MCF 10A (cell line): ENCODE measurements at regions of chr5 and their contacts with region 1.

Region 1: GRCh38 chr5:180568914-180569313 is 22.4 kb downstream of the SCGB3A1 start:
- DNase-seq: no peak
- H3K4me3 Mint-ChIP-seq: no peak overlapping the region
- H3K27ac Mint-ChIP-seq: no peak overlapping the region
- H3K4me1 Mint-ChIP-seq: no peaks in the 10 kb centered on the region
- H3K27me3 Mint-ChIP-seq: no peaks in the 10 kb centered on the region
- CTCF ChIP-seq: no peak

Region 2: GRCh38 chr5:180499684-180500083 is 69.2 kb before region 1 on chr5:
- CTCF ChIA-PET with region 1: no interaction called
- POLR2A ChIA-PET with region 1: interaction called, 4 read pairs
- intact Hi-C with region 1: loop called (anchors 5 kb)
- DNase-seq: peak; percentile 24
- H3K4me3 Mint-ChIP-seq: no peak overlapping the region
- H3K27ac Mint-ChIP-seq: peak overlapping the region; percentile 39
- H3K4me1 Mint-ChIP-seq: peaks cover 32% of the 10 kb centered on the region
- H3K27me3 Mint-ChIP-seq: no peaks in the 10 kb centered on the region
- CTCF ChIP-seq: no peak

Region 3: GRCh38 chr5:180583738-180584137 is 14.8 kb after region 1 on chr5:
- CTCF ChIA-PET with region 1: no interaction called
- POLR2A ChIA-PET with region 1: interaction called, 10 read pairs
- intact Hi-C with region 1: no loop called
- DNase-seq: no peak
- H3K4me3 Mint-ChIP-seq: no peak overlapping the region
- H3K27ac Mint-ChIP-seq: no peak overlapping the region
- H3K4me1 Mint-ChIP-seq: no peaks in the 10 kb centered on the region
- H3K27me3 Mint-ChIP-seq: no peaks in the 10 kb centered on the region
- CTCF ChIP-seq: no peak

Region 4: DNA sequence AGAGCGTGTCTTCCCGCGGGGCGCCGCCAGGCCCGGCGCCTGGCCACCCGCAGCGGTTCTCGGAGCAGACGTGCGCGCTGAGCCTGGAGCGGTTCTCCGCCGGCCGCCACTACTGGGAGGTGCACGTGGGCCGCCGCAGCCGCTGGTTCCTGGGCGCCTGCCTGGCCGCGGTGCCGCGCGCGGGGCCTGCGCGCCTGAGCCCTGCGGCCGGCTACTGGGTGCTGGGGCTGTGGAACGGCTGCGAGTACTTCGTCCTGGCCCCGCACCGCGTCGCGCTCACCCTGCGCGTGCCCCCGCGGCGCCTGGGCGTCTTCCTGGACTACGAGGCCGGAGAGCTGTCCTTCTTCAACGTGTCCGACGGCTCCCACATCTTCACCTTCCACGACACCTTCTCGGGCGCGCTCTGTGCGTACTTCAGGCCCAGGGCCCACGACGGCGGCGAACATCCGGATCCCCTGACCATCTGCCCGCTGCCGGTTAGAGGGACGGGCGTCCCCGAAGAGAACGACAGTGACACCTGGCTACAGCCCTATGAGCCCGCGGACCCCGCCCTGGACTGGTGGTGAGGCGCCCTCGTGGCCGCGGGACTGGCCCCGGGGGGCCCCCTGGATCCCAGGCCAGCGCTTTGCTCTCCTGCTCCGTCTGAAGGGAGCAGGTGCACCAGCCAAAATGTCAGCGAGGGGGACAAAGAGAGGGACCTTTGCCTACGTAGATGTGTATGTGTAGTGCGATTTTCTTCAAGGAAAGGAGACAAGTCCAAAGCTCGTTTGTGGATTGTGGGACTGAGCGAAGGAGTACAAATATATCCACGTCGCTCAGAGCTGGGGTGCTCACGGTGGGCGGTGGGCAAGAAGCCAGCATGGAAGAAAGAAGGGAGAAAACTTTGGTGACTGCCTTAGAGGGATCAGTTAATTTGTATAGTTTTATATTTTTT is 490.6 kb after region 1 on chr5:
- CTCF ChIA-PET with region 1: no interaction called
- POLR2A ChIA-PET with region 1: no interaction called
- intact Hi-C with region 1: no loop called
- DNase-seq: no peak
- H3K4me3 Mint-ChIP-seq: no peak overlapping the region
- H3K27ac Mint-ChIP-seq: no peak overlapping the region
- H3K4me1 Mint-ChIP-seq: no peaks in the 10 kb centered on the region
- H3K27me3 Mint-ChIP-seq: peaks cover 46% of the 10 kb centered on the region
- CTCF ChIP-seq: no peak